ENCODE measurements at regions of chr2 and their contacts with region 1.

Region 1: GRCh38 chr2:176118601-176119339 is 2.2 kb downstream of the HOXD10 start:
- DNase-seq: peak in 1 of 2 experiments; percentile 69
- H3K4me3 ChIP-seq: no peak overlapping the region
- H3K27ac ChIP-seq: no peak overlapping the region
- H3K4me1 ChIP-seq: peaks cover 0 to 13% (median 6%) of the 10 kb centered on the region in 4 experiments; a peak in 4 of 7 replicates
- H3K27me3 ChIP-seq: peaks cover 93 to 100% (median 100%) of the 10 kb centered on the region in 4 experiments
- CTCF ChIP-seq: peak; percentile 56 to 67 (median 64)
- EP300 ChIP-seq: no peak
- POLR2A ChIP-seq: no peak
- RAD21 ChIP-seq: peak; percentile 15 to 37; a peak in 3 of 4 replicates

Region 2: DNA sequence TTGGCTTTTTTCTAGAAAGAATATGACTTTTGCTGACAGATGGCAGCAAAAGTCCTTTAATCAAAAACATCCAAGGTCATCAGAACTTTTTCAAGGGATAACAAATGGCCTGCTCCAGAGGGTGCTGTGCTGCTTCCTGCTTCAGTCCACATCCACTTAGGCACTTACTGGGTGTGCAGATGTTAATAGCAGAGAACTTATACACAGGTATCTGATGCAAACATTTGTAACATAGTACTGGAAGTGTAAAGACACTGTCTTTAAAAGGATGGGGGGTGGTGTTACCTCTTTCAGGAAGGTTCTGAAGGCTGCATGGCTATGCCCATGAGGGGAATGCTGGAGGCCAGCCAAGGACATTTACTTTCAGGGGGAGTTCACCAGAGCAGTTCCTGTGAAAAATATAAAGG is 16.3 kb after region 1 on chr2:
- CTCF ChIA-PET with region 1: interaction called, 14 read pairs
- POLR2A ChIA-PET with region 1: no interaction called
- DNase-seq: peak in 1 of 2 experiments; percentile 33
- H3K4me3 ChIP-seq: no peak overlapping the region
- H3K27ac ChIP-seq: no peak overlapping the region
- H3K4me1 ChIP-seq: peaks cover 0 to 7% (median 3%) of the 10 kb centered on the region in 4 experiments; a peak in 5 of 7 replicates
- H3K27me3 ChIP-seq: peaks cover 93 to 100% (median 98%) of the 10 kb centered on the region in 4 experiments
- CTCF ChIP-seq: no peak
- EP300 ChIP-seq: no peak
- POLR2A ChIP-seq: no peak
- RAD21 ChIP-seq: no peak